PC-3 (cell line): ENCODE measurements at regions of chr5 and their contacts with region 1.

Region 1: GRCh38 chr5:138282920-138283742 is 8.7 kb upstream of the GFRA3 start:
- DNase-seq: peak; percentile 30
- ATAC-seq: peak; percentile 90
- H3K4me3 ChIP-seq: no peak overlapping the region
- H3K27ac ChIP-seq: no peak overlapping the region
- H3K4me1 ChIP-seq: no peaks in the 10 kb centered on the region
- H3K27me3 ChIP-seq: no peaks in the 10 kb centered on the region
- CTCF ChIP-seq: peak; percentile 50

Region 2: DNA sequence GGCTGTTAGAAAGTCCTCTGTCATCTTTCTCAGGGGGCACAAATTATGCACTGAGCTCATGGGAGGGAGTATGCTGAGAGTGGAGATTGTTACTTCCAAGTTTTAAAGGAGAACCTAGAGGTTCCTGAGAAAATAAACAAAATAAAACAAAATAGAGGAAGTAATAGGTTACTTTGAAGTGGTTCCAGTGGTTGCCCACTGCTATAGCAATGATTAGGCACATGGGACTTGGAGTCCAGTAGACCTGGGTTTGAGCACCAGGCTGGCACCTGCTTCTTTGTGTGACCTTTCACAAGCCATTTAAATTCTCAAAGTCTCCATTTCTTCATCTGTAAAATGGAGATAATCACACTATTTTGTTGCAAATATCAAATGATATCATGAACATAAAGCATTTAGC is 56.2 kb before region 1 on chr5:
- CTCF ChIA-PET with region 1: interaction called, 7 read pairs
- POLR2A ChIA-PET with region 1: no interaction called
- intact Hi-C with region 1: loop called (anchors 1 kb)
- DNase-seq: no peak
- ATAC-seq: no peak
- H3K4me3 ChIP-seq: no peak overlapping the region
- H3K27ac ChIP-seq: no peak overlapping the region
- H3K4me1 ChIP-seq: no peaks in the 10 kb centered on the region
- H3K27me3 ChIP-seq: no peaks in the 10 kb centered on the region
- CTCF ChIP-seq: no peak

Region 3: GRCh38 chr5:138953387-138954256 is 670.5 kb after region 1 on chr5:
- CTCF ChIA-PET with region 1: no interaction called
- POLR2A ChIA-PET with region 1: no interaction called
- intact Hi-C with region 1: no loop called
- DNase-seq: no peak
- ATAC-seq: no peak
- H3K4me3 ChIP-seq: no peak overlapping the region
- H3K27ac ChIP-seq: no peak overlapping the region
- H3K4me1 ChIP-seq: no peaks in the 10 kb centered on the region
- H3K27me3 ChIP-seq: no peaks in the 10 kb centered on the region
- CTCF ChIP-seq: no peak